Heart right ventricle (tissue), 16 donors: ENCODE measurements at regions of chr17 and their contacts with region 1.

Region 1: GRCh38 chr17:32486111-32486700 is 587 bp upstream of the CDK5R1 start:
- DNase-seq: peak; percentile 51 to 76
- ATAC-seq: peak; percentile 48 to 84 (median 76)
- H3K4me3 ChIP-seq: peak overlapping the region in 9 of 10 donors; percentile 39 to 66 (median 59)
- H3K27ac ChIP-seq: peak overlapping the region in 9 of 10 donors; percentile 15 to 86 (median 72)
- H3K4me1 ChIP-seq: peaks cover 16 to 44% (median 33%) of the 10 kb centered on the region in 9 donors
- H3K27me3 ChIP-seq: no peaks in the 10 kb centered on the region
- CTCF ChIP-seq: no peak

Region 2: GRCh38 chr17:32298298-32298697 is 187.9 kb before region 1 on chr17:
- intact Hi-C with region 1: no loop called
- DNase-seq: no peak
- ATAC-seq: no peak
- H3K4me3 ChIP-seq: no peak overlapping the region
- H3K27ac ChIP-seq: no peak overlapping the region
- H3K4me1 ChIP-seq: no peaks in the 10 kb centered on the region
- H3K27me3 ChIP-seq: no peaks in the 10 kb centered on the region
- CTCF ChIP-seq: no peak

Region 3: DNA sequence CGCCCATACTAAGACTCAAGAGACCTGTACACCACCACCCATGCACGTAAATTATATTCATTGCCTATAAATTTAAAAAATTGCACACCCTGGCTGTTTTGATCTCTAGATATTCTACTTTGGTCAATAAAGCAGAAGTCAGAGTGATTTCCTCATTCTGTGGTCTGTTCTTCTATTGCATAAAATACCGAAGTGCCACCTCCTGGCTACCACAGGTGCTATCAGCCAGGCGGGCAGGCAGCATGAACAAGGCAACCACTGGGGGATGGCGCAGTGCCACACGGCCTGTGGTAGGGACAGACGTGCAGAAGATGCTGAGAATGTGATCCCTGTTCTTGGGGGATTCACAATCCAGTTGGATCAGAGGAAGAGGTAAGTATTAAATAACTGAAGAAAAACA is 122.9 kb after region 1 on chr17:
- intact Hi-C with region 1: loop called in 4 of 10 experiments (anchors 10 kb)
- DNase-seq: peak; percentile 34 to 57
- ATAC-seq: peak; percentile 34 to 86 (median 66)
- H3K4me3 ChIP-seq: no peak overlapping the region
- H3K27ac ChIP-seq: no peak overlapping the region
- H3K4me1 ChIP-seq: peaks cover 0 to 5% (median 0%) of the 10 kb centered on the region in 9 donors
- H3K27me3 ChIP-seq: no peaks in the 10 kb centered on the region
- CTCF ChIP-seq: peak in 7 of 9 donors; percentile 21 to 56 (median 51)

Region 4: GRCh38 chr17:32659419-32659842 is 173.2 kb after region 1 on chr17:
- intact Hi-C with region 1: loop called in 2 of 10 experiments (anchors 5 to 10 kb)
- DNase-seq: peak; percentile 64 to 65
- ATAC-seq: peak; percentile 55 to 89 (median 84)
- H3K4me3 ChIP-seq: no peak overlapping the region
- H3K27ac ChIP-seq: no peak overlapping the region
- H3K4me1 ChIP-seq: peaks cover 0 to 21% (median 6%) of the 10 kb centered on the region in 9 donors
- H3K27me3 ChIP-seq: no peaks in the 10 kb centered on the region
- CTCF ChIP-seq: peak; percentile 79 to 95 (median 90)

Region 5: DNA sequence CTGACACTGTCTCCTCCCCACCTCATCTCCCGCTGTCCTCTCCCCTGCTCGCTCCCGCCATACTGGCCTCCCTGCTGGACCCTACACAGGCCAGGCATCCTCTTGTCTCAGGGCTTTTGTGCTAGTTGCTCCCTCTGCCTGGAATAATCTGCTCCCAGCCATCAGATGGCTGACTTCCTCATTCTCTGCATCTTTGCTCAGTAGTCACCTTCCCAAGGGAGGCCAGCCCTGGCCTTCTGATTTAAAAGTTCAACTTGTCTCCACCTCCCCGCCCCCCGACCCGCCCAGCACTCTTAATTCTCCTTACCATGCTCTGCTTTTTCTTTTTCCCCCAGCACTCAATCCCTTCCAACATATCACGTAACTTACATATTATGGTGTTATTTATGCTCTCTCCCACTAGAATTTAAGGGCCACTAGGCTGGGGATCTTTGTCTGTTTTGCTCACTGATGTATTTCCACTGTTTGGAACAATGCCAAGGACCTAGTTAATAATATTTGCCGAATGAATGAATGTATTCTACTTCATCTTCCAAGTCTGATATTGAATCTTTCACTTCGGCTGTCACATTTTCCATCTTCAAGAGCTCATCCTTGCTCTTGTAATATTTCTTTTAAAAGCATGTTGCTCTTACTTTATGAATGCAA is 178.9 kb after region 1 on chr17:
- intact Hi-C with region 1: loop called in 1 of 10 experiments (anchors 5 kb)
- DNase-seq: no peak
- ATAC-seq: no peak
- H3K4me3 ChIP-seq: no peak overlapping the region
- H3K27ac ChIP-seq: no peak overlapping the region
- H3K4me1 ChIP-seq: no peaks in the 10 kb centered on the region
- H3K27me3 ChIP-seq: no peaks in the 10 kb centered on the region
- CTCF ChIP-seq: no peak

Region 6: DNA sequence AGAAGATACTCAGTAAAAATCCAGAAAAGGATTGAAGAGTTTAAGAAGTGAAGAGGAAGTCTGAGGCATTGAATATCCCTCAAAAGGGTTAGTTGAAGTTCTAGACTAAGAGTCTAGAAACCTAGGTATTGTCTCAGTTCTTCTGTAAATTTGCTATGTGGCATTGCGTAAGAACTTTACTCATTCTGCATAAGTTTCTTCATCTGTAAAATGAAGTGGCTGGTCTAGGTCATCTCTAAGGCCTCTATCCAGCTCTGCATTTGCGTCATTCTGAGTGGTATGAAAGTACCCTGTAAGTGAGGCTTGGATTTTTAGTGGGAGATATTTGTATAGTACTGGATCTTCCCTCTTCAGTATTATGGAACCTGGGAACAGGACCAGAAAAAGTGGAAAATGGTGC is 260.5 kb after region 1 on chr17:
- intact Hi-C with region 1: loop called in 4 of 10 experiments (anchors 5 to 10 kb)
- DNase-seq: no peak
- ATAC-seq: no peak
- H3K4me3 ChIP-seq: no peak overlapping the region
- H3K27ac ChIP-seq: no peak overlapping the region
- H3K4me1 ChIP-seq: peaks cover 0 to 14% (median 0%) of the 10 kb centered on the region in 9 donors
- H3K27me3 ChIP-seq: no peaks in the 10 kb centered on the region
- CTCF ChIP-seq: no peak

Region 7: DNA sequence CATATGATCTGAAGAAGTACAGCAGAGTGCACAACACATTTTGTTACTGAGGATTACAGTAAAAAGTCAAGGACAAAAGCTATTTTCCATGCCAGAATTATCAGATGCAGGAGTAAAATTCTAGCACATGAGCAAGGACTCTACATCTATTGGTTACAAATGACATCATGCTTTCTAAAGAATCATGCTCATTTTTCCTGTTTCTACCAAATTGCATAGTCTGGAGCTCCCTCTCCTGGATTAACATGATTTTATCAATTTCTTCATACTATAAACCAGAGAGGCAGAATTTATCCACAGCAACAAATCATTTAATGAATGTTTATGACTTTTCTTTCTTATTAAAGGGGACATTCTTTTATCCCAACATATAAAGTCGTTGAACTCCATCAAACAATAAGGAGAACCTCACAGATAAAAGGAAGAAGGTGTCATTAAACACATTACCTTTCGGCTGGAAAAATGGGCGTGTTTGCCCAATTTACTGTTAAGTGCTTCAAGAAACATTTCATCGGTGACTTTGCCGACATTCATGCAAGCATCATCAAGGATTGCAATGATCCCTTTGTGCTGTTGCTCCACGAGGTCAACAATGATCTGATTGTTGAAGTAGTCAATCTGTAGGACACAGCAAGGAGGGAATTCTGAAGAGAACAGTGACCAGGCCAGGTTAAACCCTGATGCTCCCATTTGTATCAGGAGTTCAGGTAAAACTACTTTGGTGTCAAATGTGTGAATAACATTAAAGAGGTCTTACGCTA is 269.0 kb after region 1 on chr17:
- intact Hi-C with region 1: loop called in 8 of 10 experiments (anchors 2 to 10 kb)
- DNase-seq: no peak
- ATAC-seq: peak in 7 of 8 donors; percentile 52 to 82 (median 72)
- H3K4me3 ChIP-seq: no peak overlapping the region
- H3K27ac ChIP-seq: no peak overlapping the region
- H3K4me1 ChIP-seq: peaks cover 0 to 5% (median 0%) of the 10 kb centered on the region in 9 donors
- H3K27me3 ChIP-seq: no peaks in the 10 kb centered on the region
- CTCF ChIP-seq: peak in 8 of 9 donors; percentile 17 to 69 (median 58)

Region 8: DNA sequence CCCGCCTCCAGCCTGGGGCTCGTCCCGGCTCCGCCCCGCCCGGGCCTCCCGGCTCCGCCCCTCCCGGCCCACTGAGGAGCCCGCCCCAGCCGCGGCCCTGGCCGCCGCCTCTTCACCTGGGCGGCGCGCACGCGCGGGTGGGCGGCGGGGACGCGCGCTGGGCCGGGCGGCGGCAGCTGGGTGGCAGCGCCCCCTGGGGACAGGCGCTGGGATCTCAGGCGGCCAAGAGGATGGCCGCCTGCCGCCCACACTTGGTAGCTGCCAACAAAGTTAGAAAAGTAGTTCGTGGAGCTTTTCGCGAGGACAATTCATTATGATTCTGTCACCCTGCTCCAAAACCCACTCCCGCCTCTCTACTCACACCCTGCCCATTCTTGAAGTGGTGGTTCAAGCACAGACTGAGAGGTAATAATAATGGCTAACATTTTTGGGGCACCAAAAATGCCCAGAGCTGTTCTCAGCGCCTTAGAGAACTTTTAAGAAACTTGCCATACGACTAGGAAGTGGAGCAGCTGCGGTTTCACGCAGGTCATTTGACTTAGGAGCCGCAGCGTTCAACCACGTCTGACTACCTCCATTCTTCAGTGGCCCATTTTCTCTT is 391.1 kb after region 1 on chr17:
- intact Hi-C with region 1: loop called in 1 of 10 experiments (anchors 5 kb)
- DNase-seq: peak; percentile 84 to 93
- ATAC-seq: peak; percentile 98 to 100 (median 99)
- H3K4me3 ChIP-seq: peak overlapping the region in 9 of 10 donors; percentile 74 to 97 (median 85)
- H3K27ac ChIP-seq: peak overlapping the region; percentile 64 to 91 (median 84)
- H3K4me1 ChIP-seq: peaks cover 0 to 32% (median 16%) of the 10 kb centered on the region in 9 donors
- H3K27me3 ChIP-seq: peaks cover 0 to 13% (median 0%) of the 10 kb centered on the region in 7 donors
- CTCF ChIP-seq: peak; percentile 74 to 96 (median 85)